Heart left ventricle (tissue), 16 donors: ENCODE measurements at regions of chr6 and their contacts with region 1.

Region 1: DNA sequence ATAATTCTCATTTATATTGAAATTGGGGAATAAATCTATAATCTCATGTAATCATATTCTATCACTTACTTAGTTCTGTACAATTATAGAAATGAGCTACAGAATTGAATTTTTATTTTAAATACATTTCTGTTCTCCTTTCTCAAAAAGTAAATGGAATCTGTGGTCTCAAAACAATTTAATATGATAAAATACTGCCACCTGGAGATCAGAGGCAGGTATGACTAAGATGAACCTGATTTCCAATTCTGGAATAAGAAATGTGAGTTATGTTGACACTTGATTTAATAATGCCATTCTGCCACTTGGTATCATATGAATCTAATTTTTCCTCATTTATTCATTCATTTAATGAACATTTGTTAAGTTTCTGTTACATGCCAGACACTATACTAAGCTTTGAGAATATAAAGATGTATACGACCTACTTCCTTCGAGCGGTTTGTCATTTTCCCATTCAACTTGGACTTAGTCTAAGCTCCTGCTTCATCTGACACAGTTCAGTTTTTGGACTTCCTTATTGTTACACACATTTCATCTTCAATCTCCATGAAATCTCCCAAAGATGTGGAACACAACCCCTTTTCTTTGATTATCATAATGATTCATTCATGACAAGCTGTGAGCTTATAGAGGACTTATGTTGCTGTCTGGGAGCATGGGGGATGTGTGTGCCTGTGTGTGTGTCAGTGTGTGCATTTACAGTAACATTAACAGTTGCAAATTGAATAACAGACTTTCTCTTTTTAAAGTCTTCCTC is 7.5 kb upstream of the CCDC28A start:
- DNase-seq: no peak
- ATAC-seq: no peak
- H3K4me3 ChIP-seq: no peak overlapping the region
- H3K27ac ChIP-seq: no peak overlapping the region
- H3K4me1 ChIP-seq: no peaks in the 10 kb centered on the region
- H3K27me3 ChIP-seq: no peaks in the 10 kb centered on the region
- CTCF ChIP-seq: peak; percentile 61 to 80 (median 74)
- POLR2A ChIP-seq: no peak

Region 2: GRCh38 chr6:138001750-138002349 is 764.2 kb before region 1 on chr6:
- intact Hi-C with region 1: loop called in 1 of 10 experiments (anchors 10 kb)
- DNase-seq: peak in 4 of 5 donors; percentile 34 to 57 (median 35)
- ATAC-seq: peak in 1 of 4 donors; percentile 51
- H3K4me3 ChIP-seq: no peak overlapping the region
- H3K27ac ChIP-seq: no peak overlapping the region
- H3K4me1 ChIP-seq: no peaks in the 10 kb centered on the region
- H3K27me3 ChIP-seq: no peaks in the 10 kb centered on the region
- CTCF ChIP-seq: peak; percentile 73 to 90 (median 86)
- POLR2A ChIP-seq: no peak

Region 3: GRCh38 chr6:138240476-138241245 is 525.4 kb before region 1 on chr6:
- intact Hi-C with region 1: no loop called
- DNase-seq: no peak
- ATAC-seq: no peak
- H3K4me3 ChIP-seq: no peak overlapping the region
- H3K27ac ChIP-seq: no peak overlapping the region
- H3K4me1 ChIP-seq: no peaks in the 10 kb centered on the region
- H3K27me3 ChIP-seq: no peaks in the 10 kb centered on the region
- CTCF ChIP-seq: no peak
- POLR2A ChIP-seq: no peak

Region 4: GRCh38 chr6:138278326-138278725 is 487.8 kb before region 1 on chr6:
- intact Hi-C with region 1: loop called in 1 of 10 experiments (anchors 10 kb)
- DNase-seq: peak in 2 of 5 donors; percentile 8 to 30
- ATAC-seq: peak in 3 of 4 donors; percentile 56 to 79 (median 72)
- H3K4me3 ChIP-seq: no peak overlapping the region
- H3K27ac ChIP-seq: no peak overlapping the region
- H3K4me1 ChIP-seq: no peaks in the 10 kb centered on the region
- H3K27me3 ChIP-seq: no peaks in the 10 kb centered on the region
- CTCF ChIP-seq: peak in 10 of 12 donors; percentile 13 to 53 (median 40)
- POLR2A ChIP-seq: no peak

Region 5: GRCh38 chr6:138588805-138589434 is 177.2 kb before region 1 on chr6:
- intact Hi-C with region 1: loop called (anchors 1 to 5 kb)
- DNase-seq: peak in 4 of 5 donors; percentile 46 to 60 (median 59)
- ATAC-seq: peak in 3 of 4 donors; percentile 32 to 58 (median 49)
- H3K4me3 ChIP-seq: no peak overlapping the region
- H3K27ac ChIP-seq: no peak overlapping the region
- H3K4me1 ChIP-seq: peaks cover 0 to 27% (median 10%) of the 10 kb centered on the region in 12 donors
- H3K27me3 ChIP-seq: no peaks in the 10 kb centered on the region
- CTCF ChIP-seq: peak; percentile 79 to 96 (median 92)
- POLR2A ChIP-seq: no peak

Region 6: GRCh38 chr6:138692058-138692977 is 73.8 kb before region 1 on chr6:
- intact Hi-C with region 1: loop called (anchors 2 to 5 kb)
- DNase-seq: peak; percentile 72 to 91 (median 82)
- ATAC-seq: peak; percentile 61 to 90 (median 82)
- H3K4me3 ChIP-seq: peak overlapping the region; percentile 36 to 91 (median 72)
- H3K27ac ChIP-seq: peak overlapping the region; percentile 50 to 82 (median 68)
- H3K4me1 ChIP-seq: peaks cover 0 to 19% (median 4%) of the 10 kb centered on the region in 12 donors
- H3K27me3 ChIP-seq: no peaks in the 10 kb centered on the region
- CTCF ChIP-seq: peak; percentile 72 to 97 (median 88)
- POLR2A ChIP-seq: no peak

Region 7: DNA sequence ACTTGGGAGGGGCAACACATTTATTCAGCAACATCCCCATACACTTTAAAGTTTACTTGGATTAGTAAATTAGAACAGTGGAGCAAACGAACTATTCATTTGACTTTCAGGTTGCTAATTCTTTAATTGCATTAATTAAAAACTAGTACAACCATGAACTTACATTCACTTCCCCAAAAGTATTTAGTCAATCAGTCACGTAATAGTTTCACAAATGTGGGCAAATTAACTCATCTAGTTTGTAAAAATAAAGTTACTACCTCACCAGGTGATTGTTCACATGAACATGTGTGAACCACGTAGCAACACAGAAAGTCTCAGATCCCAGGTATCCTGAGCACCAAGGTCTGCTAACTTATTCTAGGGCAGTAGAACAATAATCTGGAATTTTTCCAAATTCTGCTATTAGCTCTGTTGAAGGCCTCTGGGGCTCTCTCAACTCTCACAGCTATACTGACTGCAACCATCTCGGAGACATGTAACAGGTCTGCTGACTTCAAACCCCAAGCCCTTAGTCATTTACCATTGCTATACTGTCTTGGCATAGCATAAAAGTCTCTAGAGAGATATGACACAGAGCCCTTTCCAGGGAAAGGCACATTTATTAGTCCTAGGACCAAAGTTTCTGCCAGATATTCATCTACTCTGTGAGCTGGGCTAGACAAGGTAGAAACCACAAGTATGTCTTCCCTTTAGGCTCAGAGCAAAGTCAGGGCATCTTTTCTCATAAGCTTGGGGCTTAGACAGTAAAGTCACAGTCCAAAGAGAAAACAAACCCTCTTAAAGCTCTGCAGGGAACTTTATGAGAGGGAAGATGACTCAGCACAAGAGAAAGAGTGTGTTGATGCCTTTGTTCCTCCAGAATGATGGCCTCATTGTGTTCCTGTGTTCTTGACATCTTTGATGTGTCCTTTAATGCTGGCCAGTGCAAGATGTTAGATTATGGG is 43.4 kb before region 1 on chr6:
- intact Hi-C with region 1: loop called in 1 of 10 experiments (anchors 5 kb)
- DNase-seq: no peak
- ATAC-seq: no peak
- H3K4me3 ChIP-seq: no peak overlapping the region
- H3K27ac ChIP-seq: no peak overlapping the region
- H3K4me1 ChIP-seq: peaks cover 0 to 34% (median 19%) of the 10 kb centered on the region in 12 donors
- H3K27me3 ChIP-seq: no peaks in the 10 kb centered on the region
- CTCF ChIP-seq: no peak
- POLR2A ChIP-seq: no peak